ENCODE measurements at regions of chr19 and their contacts with region 1.

Region 1: DNA sequence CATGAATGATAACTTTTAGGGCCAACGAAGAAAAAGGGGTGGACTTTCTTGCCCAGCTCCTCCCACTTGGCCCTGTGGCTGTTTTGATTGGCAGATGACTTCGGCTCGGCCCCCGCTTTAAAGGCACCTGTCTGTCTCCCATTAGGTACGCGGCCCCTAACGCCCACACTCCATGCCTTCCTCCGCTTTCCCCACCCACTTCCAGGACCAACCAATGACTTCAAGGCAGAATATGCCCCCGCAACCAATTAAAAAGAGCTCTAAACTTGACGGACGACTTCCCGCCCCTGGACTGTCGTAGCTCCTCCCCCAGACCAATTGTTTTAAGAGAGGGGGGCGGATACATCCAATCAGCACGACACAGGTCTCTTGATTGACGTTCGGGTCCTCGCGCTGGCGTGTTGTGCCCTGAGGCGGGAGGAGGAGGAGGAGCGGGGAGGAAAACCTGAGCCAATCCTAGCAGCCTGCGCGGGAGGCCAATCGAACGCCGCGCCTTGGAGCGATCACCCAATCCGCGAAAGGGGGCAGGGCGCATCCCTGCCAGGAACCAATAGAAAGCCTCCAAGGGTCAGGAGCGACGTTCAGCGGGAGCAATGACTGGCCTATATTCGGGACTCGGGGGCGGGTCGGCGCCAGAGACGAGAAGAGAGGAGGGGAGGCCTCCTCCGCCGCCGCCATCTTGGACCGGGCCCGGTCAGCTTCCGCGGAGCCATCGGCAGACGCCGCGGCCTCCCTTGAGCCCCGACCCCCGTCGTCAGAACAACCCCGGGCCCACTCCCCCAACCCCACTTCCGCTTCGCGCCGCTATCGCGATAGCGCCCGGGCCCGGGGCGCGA is at the start of gene CNOT3:
- H3K4me3 Mint-ChIP-seq: peak within 1 kb of the TSS; percentile 87
- H3K27ac Mint-ChIP-seq: peak within 1 kb of the TSS; percentile 90
- H3K4me1 Mint-ChIP-seq: peaks cover 52% of the 10 kb centered on the region
- H3K27me3 Mint-ChIP-seq: peaks cover 9% of the 10 kb centered on the region

Region 2: DNA sequence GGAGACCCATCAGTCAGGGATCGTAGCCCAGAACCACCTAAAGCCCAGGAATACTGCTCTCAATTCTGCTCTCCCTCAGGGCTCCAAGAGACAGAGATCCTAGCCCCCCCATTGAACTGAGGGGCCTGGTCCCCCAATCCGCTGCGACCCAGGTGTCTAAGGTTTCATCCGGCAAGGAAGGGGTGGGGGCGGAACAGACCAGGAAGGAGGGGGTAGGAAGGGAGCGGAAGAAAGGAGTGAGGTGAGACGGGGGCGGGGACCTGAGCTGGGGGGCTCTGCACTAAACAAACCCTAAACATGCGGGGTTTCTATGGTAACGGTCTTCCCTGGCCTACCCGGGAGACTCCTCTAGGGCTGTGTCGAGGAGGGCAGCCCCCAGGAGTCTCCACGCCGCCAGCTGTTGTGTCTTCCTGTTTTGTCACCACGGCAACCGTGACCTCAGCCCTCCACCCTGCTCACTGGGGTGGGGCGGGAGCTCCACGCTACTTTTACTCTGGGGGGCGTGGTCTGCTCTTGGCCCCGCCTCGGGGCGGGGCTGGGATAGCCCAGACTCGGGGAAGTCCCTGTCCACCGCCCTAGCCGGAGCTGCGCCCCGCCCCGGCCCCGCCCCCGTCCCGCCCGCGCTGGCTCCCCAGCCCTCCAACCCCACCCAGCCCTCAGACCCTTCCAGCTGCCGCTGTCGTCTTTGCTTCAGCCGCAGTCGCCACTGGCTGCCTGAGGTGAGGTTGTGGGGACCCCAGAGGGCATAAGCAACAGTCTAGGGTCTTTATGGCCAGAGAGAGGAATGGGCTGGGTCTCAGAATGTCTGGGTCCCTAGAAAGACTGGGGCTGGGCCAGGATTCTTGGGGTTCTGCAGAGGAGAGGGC is 269.8 kb before region 1 on chr19 and contains the start of gene MYADM:
- intact Hi-C with region 1: loop called (anchors 2 kb)
- H3K4me3 Mint-ChIP-seq: peak within 1 kb of the TSS; percentile 93
- H3K27ac Mint-ChIP-seq: peak within 1 kb of the TSS; percentile 95
- H3K4me1 Mint-ChIP-seq: peaks cover 59% of the 10 kb centered on the region
- H3K27me3 Mint-ChIP-seq: peaks cover 16% of the 10 kb centered on the region

Region 3: DNA sequence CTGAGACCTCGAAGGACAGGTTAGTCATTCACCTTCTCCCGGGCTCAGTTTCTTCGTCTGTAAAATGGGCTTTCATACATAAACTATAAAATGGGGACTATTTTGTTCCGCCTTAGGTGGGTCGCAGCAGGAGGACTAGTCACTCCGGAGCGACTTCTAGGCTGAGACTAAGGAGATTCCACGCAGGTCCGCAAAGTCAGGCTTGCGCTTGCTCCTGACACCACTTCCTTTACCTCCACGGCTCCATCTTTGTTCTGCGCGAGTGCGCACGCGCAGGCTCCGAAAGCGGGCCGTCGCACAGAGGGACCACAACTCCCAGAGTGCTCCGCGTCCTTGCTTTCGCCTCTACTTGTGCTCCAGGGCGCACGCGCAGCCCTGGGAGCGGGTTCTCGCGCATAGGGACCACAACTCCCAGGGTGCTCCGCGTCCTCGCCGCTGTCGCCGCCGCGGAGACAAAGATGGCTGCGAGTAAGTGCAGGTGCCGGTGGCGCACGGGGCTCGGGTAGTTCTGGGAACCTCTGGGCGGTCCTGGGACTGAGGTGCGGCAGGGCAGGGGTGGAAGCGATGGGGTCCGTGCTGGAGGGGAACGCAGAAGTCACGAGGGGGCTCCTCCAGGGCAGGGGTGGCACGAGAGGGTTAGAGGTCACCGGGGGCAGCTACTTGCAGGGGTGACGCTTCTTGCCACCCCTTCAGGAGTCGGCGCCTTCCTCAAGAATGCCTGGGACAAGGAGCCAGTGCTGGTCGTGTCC is 34.7 kb before region 1 on chr19 and contains the start of gene NDUFA3:
- intact Hi-C with region 1: loop called (anchors 1 kb)
- H3K4me3 Mint-ChIP-seq: peak within 1 kb of the TSS; percentile 100
- H3K27ac Mint-ChIP-seq: peak within 1 kb of the TSS; percentile 93
- H3K4me1 Mint-ChIP-seq: peaks cover 65% of the 10 kb centered on the region
- H3K27me3 Mint-ChIP-seq: no peaks in the 10 kb centered on the region

Region 4: GRCh38 chr19:54159352-54160181 is 22.3 kb after region 1 on chr19 and contains the start of gene LENG1:
- intact Hi-C with region 1: loop called (anchors 2 kb)
- H3K4me3 Mint-ChIP-seq: peak within 1 kb of the TSS; percentile 90
- H3K27ac Mint-ChIP-seq: peak within 1 kb of the TSS; percentile 97
- H3K4me1 Mint-ChIP-seq: peaks cover 70% of the 10 kb centered on the region
- H3K27me3 Mint-ChIP-seq: peaks cover 7% of the 10 kb centered on the region

Region 5: DNA sequence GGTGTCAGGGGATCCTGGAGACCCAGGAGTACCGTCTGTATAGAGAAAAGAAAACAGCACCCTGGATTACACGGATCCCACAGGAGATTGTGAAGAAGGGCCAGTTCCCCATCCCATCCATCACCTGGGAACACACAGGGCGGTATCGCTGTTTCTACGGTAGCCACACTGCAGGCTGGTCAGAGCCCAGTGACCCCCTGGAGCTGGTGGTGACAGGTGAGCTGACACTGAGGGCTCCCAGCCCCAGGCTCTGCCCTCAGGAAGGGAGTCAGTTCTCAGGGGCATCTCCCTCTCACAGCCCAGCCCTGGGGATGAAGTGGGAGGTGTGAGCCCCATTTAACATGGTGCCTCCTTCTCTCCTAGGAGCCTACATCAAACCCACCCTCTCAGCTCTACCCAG is 457.4 kb after region 1 on chr19:
- intact Hi-C with region 1: no loop called
- H3K4me3 Mint-ChIP-seq: no peak overlapping the region
- H3K27ac Mint-ChIP-seq: peak overlapping the region; percentile 83
- H3K4me1 Mint-ChIP-seq: peaks cover 73% of the 10 kb centered on the region
- H3K27me3 Mint-ChIP-seq: peaks cover 25% of the 10 kb centered on the region

Measured in dendritic cell treated with granulocyte-macrophage colony-stimulating factor and Interleukin-4, amounts not matched to agents 40 ng/mL and 50 ng/mL, for 4 days (primary cell).